Mammary epithelial cell (primary cell): ENCODE measurements at regions of chr5 and their contacts with region 1.

Region 1: GRCh38 chr5:55903121-55903701 is 52.1 kb downstream of the IL31RA start:
- DNase-seq: peak; percentile 29
- H3K4me3 ChIP-seq: no peak overlapping the region
- H3K27ac ChIP-seq: no peak overlapping the region
- H3K4me1 ChIP-seq: peaks cover 10% of the 10 kb centered on the region
- H3K27me3 ChIP-seq: no peaks in the 10 kb centered on the region
- CTCF ChIP-seq: no peak

Region 2: GRCh38 chr5:55407059-55407684 is 496.0 kb before region 1 on chr5:
- CTCF ChIA-PET with region 1: no interaction called
- dilution Hi-C with region 1: no loop called
- in situ Hi-C with region 1: loop called in 1 of 2 experiments (anchors 25 kb)
- intact Hi-C with region 1: no loop called
- DNase-seq: peak; percentile 23
- H3K4me3 ChIP-seq: no peak overlapping the region
- H3K27ac ChIP-seq: no peak overlapping the region
- H3K4me1 ChIP-seq: no peaks in the 10 kb centered on the region
- H3K27me3 ChIP-seq: no peaks in the 10 kb centered on the region
- CTCF ChIP-seq: peak; percentile 68 to 76

Region 3: GRCh38 chr5:55711968-55712859 is 191.0 kb before region 1 on chr5 and contains the start of gene SLC38A9:
- CTCF ChIA-PET with region 1: no interaction called
- dilution Hi-C with region 1: no loop called
- in situ Hi-C with region 1: loop called in 1 of 2 experiments (anchors 25 kb)
- intact Hi-C with region 1: loop called (anchors 5 kb)
- DNase-seq: peak; percentile 91
- H3K4me3 ChIP-seq: peak within 1 kb of the TSS; percentile 66 to 99 (median 98)
- H3K27ac ChIP-seq: peak within 1 kb of the TSS; percentile 75
- H3K4me1 ChIP-seq: peaks cover 18% of the 10 kb centered on the region
- H3K27me3 ChIP-seq: no peaks in the 10 kb centered on the region
- CTCF ChIP-seq: no peak
- total RNA-seq, gene SLC38A9: 23.0 to 62.5 TPM

Region 4: DNA sequence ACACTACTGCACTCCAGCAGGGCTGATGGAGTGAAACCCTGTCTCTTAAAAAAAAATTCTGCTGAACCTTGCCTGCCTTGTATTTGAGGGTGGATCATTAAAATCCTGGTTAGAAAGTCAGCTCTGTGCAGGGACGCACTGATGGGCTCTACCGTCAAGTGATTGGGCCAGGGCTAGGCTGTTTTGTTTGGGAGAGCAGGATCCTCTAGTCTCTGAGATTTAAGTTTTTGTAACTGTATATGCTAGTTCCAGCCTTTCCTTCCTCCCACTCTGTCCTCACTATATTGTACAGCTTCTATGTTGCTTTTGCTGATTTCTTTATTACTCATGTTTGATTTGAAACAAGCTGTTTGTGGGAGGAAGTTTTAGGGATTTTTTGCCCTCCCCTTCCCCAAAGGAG is 153.8 kb before region 1 on chr5:
- CTCF ChIA-PET with region 1: no interaction called
- dilution Hi-C with region 1: no loop called
- in situ Hi-C with region 1: loop called in 1 of 2 experiments (anchors 25 kb)
- intact Hi-C with region 1: no loop called
- DNase-seq: no peak
- H3K4me3 ChIP-seq: no peak overlapping the region
- H3K27ac ChIP-seq: no peak overlapping the region
- H3K4me1 ChIP-seq: no peaks in the 10 kb centered on the region
- H3K27me3 ChIP-seq: no peaks in the 10 kb centered on the region
- CTCF ChIP-seq: no peak

Region 5: DNA sequence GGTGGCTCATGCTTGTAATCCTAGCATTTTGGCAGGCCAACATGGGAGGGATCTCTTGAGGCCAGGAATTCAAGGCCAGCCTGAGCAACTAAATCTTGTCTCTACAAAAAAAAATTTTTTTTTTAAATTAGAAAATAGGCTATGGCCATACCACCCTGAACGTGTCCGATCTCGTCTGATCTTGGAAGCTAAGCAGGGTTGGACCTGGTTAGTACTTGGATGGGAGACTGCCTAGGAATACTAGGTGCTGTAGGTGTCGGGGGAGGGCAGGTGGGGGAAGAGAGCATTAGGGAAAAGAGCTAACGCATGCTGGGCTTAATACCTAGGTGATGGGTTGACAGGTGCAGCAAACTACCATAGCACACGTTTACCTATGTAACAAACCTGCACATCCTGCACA is 125.9 kb before region 1 on chr5:
- CTCF ChIA-PET with region 1: no interaction called
- dilution Hi-C with region 1: no loop called
- in situ Hi-C with region 1: no loop called
- intact Hi-C with region 1: loop called (anchors 10 kb)
- DNase-seq: no peak
- H3K4me3 ChIP-seq: no peak overlapping the region
- H3K27ac ChIP-seq: no peak overlapping the region
- H3K4me1 ChIP-seq: no peaks in the 10 kb centered on the region
- H3K27me3 ChIP-seq: no peaks in the 10 kb centered on the region
- CTCF ChIP-seq: no peak